Activated CD4-positive, alpha-beta T cell treated with anti-CD3 and anti-CD28 coated beads, Interleukin-2, amount 10 ng/mL, durations not matched to agents 7 days and 5 days (primary cell): ENCODE measurements at regions of chr20 and their contacts with region 1.

Region 1: GRCh38 chr20:1674361-1674760 is 16.8 kb upstream of the SIRPG start:
- DNase-seq: peak; percentile 70
- H3K4me3 Mint-ChIP-seq: peak overlapping the region; percentile 1
- H3K27ac Mint-ChIP-seq: peak overlapping the region; percentile 84
- H3K4me1 Mint-ChIP-seq: peaks cover 93% of the 10 kb centered on the region
- H3K27me3 Mint-ChIP-seq: no peaks in the 10 kb centered on the region

Region 2: GRCh38 chr20:1033751-1034414 is 640.5 kb before region 1 on chr20:
- CTCF ChIA-PET with region 1: no interaction called
- POLR2A ChIA-PET with region 1: no interaction called
- DNase-seq: no peak
- H3K4me3 Mint-ChIP-seq: no peak overlapping the region
- H3K27ac Mint-ChIP-seq: no peak overlapping the region
- H3K4me1 Mint-ChIP-seq: no peaks in the 10 kb centered on the region
- H3K27me3 Mint-ChIP-seq: peaks cover 9% of the 10 kb centered on the region

Region 3: DNA sequence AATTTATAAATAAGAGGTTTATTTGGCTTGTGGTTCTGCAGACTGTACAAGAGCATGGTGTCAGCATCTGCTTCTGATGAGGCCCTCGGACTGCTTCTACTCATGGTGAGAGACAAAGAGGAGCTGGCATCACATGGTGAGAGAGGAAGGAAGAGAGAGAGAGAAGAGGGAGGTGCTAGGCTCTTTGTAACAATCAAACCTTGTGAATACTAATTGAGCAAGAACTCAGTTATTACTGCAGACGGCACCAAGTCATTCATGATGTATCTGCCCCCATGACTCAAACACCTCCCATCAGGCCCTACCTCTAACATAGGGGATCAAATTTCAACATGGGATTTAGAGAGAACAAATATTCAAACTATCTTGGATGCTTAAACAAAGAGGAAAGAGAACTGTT is 10.4 kb before region 1 on chr20:
- CTCF ChIA-PET with region 1: interaction called, 26 read pairs
- POLR2A ChIA-PET with region 1: no interaction called
- DNase-seq: no peak
- H3K4me3 Mint-ChIP-seq: peak overlapping the region; percentile 10
- H3K27ac Mint-ChIP-seq: peak overlapping the region; percentile 81
- H3K4me1 Mint-ChIP-seq: peaks cover 90% of the 10 kb centered on the region
- H3K27me3 Mint-ChIP-seq: no peaks in the 10 kb centered on the region

Region 4: DNA sequence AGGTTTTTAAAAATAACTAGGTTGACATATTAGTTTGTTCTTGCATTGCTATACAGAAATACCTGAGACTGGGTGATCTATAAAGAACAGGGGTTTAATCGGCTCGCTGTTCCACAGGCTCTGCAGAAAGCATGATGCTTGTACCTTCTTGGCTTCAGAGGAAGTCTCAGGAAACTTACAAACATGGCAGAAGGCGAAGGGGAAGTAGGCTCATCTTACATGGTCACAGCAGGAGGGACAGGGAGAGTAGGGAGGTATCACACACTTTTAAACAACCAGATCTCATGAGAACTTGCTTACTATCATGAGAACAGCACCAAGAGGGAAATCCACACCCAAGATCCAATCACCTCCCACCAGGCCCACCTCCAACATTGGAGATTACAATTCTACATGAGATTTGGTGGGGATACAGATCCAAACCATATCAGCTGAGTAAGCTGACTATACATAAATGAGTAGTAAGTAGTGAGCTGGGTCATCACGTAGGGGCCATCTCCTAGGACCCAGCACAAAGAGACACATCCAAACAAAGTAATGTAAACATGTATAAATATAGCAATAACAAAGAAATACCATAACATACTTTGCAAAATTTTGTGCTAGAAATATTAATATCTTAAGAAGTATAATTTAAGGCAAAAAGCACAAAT is 14.7 kb after region 1 on chr20:
- CTCF ChIA-PET with region 1: interaction called, 12 read pairs
- POLR2A ChIA-PET with region 1: no interaction called
- DNase-seq: no peak
- H3K4me3 Mint-ChIP-seq: no peak overlapping the region
- H3K27ac Mint-ChIP-seq: no peak overlapping the region
- H3K4me1 Mint-ChIP-seq: peaks cover 38% of the 10 kb centered on the region
- H3K27me3 Mint-ChIP-seq: no peaks in the 10 kb centered on the region

Region 5: GRCh38 chr20:1702328-1702727 is 28.0 kb after region 1 on chr20:
- CTCF ChIA-PET with region 1: no interaction called
- POLR2A ChIA-PET with region 1: no interaction called
- DNase-seq: no peak
- H3K4me3 Mint-ChIP-seq: no peak overlapping the region
- H3K27ac Mint-ChIP-seq: no peak overlapping the region
- H3K4me1 Mint-ChIP-seq: peaks cover 10% of the 10 kb centered on the region
- H3K27me3 Mint-ChIP-seq: peaks cover 2% of the 10 kb centered on the region